ENCODE measurements at regions of chr3 and their contacts with region 1.

Region 1: DNA sequence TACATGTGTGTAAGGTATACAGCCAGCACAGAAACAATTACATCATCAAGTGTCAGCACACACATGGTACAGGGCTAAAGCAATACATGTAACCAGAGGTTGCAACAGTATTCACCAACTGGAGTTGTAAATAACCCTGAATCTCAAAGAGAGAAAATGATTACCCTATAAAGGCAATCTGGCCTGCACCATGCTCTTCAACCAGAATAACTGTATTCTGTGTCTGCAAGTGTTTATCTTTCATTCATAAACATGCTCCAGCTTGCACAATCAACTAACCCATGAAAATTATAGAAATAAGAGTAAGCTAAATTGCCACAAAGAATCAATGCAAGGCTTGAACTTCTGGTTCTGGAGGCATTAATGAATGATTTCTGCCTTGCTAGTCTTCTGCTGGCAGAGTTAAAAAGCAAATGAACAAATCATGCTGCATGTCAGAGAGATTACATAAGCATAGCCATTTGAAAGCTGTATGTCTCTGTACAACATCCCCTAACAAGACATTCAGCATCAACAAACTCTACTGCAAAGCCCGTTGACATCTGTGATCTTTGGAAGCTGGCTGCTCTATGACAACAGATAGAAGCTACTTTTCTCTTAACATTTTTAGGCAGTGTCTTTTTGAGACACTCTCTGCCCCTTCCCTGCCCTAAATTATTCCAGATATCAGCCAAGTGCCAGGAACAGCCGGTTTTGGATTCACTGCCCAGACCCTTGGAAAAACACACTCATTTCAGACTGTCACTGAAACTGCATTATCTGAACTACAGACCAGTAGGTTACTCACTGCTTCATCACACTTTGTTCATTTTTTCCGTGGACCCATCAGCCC is 871.0 kb downstream of the OTOL1 start:
- DNase-seq: peak; percentile 61
- ATAC-seq: peak; percentile 76
- H3K4me3 ChIP-seq: no peak overlapping the region
- H3K27ac ChIP-seq: no peak overlapping the region
- H3K4me1 ChIP-seq: peaks cover 6% of the 10 kb centered on the region; the same call in 1 of the 2 replicates
- H3K27me3 ChIP-seq: no peaks in the 10 kb centered on the region
- CTCF ChIP-seq: no peak
- POLR2A ChIP-seq: no peak
- RAD21 ChIP-seq: no peak

Region 2: GRCh38 chr3:161905520-161906132 is 462.0 kb before region 1 on chr3:
- CTCF ChIA-PET with region 1: no interaction called
- POLR2A ChIA-PET with region 1: no interaction called
- dilution Hi-C with region 1: no loop called
- in situ Hi-C with region 1: no loop called
- intact Hi-C with region 1: no loop called
- DNase-seq: no peak
- ATAC-seq: no peak
- H3K4me3 ChIP-seq: no peak overlapping the region
- H3K27ac ChIP-seq: no peak overlapping the region
- H3K4me1 ChIP-seq: no peaks in the 10 kb centered on the region
- H3K27me3 ChIP-seq: no peaks in the 10 kb centered on the region
- CTCF ChIP-seq: no peak
- POLR2A ChIP-seq: no peak
- RAD21 ChIP-seq: no peak

Region 3: GRCh38 chr3:162421721-162422120 is 54.1 kb after region 1 on chr3:
- CTCF ChIA-PET with region 1: no interaction called
- POLR2A ChIA-PET with region 1: no interaction called
- dilution Hi-C with region 1: no loop called
- in situ Hi-C with region 1: no loop called
- intact Hi-C with region 1: loop called (anchors 10 kb)
- DNase-seq: no peak
- ATAC-seq: no peak
- H3K4me3 ChIP-seq: no peak overlapping the region
- H3K27ac ChIP-seq: no peak overlapping the region
- H3K4me1 ChIP-seq: no peaks in the 10 kb centered on the region
- H3K27me3 ChIP-seq: no peaks in the 10 kb centered on the region
- CTCF ChIP-seq: no peak
- POLR2A ChIP-seq: no peak
- RAD21 ChIP-seq: no peak

Region 4: GRCh38 chr3:162517110-162517509 is 149.5 kb after region 1 on chr3:
- CTCF ChIA-PET with region 1: no interaction called
- POLR2A ChIA-PET with region 1: no interaction called
- dilution Hi-C with region 1: no loop called
- in situ Hi-C with region 1: no loop called
- intact Hi-C with region 1: loop called (anchors 10 kb)
- DNase-seq: no peak
- ATAC-seq: no peak
- H3K4me3 ChIP-seq: no peak overlapping the region
- H3K27ac ChIP-seq: no peak overlapping the region
- H3K4me1 ChIP-seq: no peaks in the 10 kb centered on the region
- H3K27me3 ChIP-seq: no peaks in the 10 kb centered on the region
- CTCF ChIP-seq: peak; percentile 24; the same call in 1 of the 2 replicates
- POLR2A ChIP-seq: no peak
- RAD21 ChIP-seq: no peak